Right cardiac atrium (tissue), 5 donors: ENCODE measurements at regions of chr18 and their contacts with region 1.

Region 1: DNA sequence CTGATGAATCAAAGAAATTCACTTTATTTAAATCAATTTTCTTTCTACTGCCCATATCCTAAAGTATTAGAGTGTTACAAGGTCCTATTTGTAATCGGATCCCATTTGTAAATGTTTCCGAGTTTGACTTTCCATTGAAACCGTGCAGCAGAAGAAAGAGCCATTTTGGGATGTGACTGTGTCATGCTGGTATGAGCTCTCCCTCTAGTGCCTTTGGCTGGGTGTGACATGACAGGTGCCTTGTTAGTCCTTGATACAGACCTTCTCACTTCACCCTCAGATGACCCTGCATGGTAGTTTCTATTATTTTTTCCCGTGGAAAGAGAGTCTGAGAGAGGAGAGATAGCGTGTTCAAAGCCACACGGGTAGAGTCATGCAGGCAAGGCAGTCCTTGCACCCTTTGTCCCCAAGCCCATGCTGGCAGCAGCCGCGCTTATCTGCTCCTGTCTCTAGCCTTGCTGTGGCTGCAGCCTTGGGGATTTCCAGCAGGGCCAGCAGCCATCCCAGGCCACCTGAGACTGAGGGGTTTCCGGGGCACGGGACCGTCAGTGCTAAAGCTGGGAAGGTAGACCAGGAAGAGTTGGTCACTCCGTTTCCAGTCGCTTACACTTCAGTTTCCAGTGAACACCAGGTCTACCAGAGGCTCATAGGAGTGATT is 21.4 kb downstream of the CHMP1B start:
- DNase-seq: no peak
- ATAC-seq: peak; percentile 87 to 90
- H3K4me3 ChIP-seq: no peak overlapping the region
- H3K27ac ChIP-seq: peak overlapping the region; percentile 9
- H3K4me1 ChIP-seq: no peaks in the 10 kb centered on the region
- H3K27me3 ChIP-seq: no peaks in the 10 kb centered on the region

Region 2: GRCh38 chr18:11654736-11655605 is 217.6 kb before region 1 on chr18:
- intact Hi-C with region 1: loop called in 1 of 4 experiments (anchors 10 kb)
- DNase-seq: peak; percentile 52 to 84 (median 77)
- ATAC-seq: peak; percentile 66 to 83
- H3K4me3 ChIP-seq: no peak overlapping the region
- H3K27ac ChIP-seq: no peak overlapping the region
- H3K4me1 ChIP-seq: no peaks in the 10 kb centered on the region
- H3K27me3 ChIP-seq: no peaks in the 10 kb centered on the region

Region 3: GRCh38 chr18:11925800-11926481 is 53.3 kb after region 1 on chr18:
- intact Hi-C with region 1: no loop called
- DNase-seq: no peak
- ATAC-seq: no peak
- H3K4me3 ChIP-seq: no peak overlapping the region
- H3K27ac ChIP-seq: no peak overlapping the region
- H3K4me1 ChIP-seq: no peaks in the 10 kb centered on the region
- H3K27me3 ChIP-seq: no peaks in the 10 kb centered on the region